ENCODE measurements at regions of chr18 and their contacts with region 1.

Region 1: GRCh38 chr18:58864146-58865032 is at the start of gene ZNF532:
- DNase-seq: no peak
- H3K4me3 ChIP-seq: peak within 1 kb of the TSS; percentile 52 to 69
- H3K27ac ChIP-seq: peak within 1 kb of the TSS; percentile 99 to 100
- H3K4me1 ChIP-seq: peaks cover 16 to 74% of the 10 kb centered on the region in 2 donors
- H3K27me3 ChIP-seq: no peaks in the 10 kb centered on the region
- CTCF ChIP-seq: no peak
- total RNA-seq, gene ZNF532: 161 TPM

Region 2: DNA sequence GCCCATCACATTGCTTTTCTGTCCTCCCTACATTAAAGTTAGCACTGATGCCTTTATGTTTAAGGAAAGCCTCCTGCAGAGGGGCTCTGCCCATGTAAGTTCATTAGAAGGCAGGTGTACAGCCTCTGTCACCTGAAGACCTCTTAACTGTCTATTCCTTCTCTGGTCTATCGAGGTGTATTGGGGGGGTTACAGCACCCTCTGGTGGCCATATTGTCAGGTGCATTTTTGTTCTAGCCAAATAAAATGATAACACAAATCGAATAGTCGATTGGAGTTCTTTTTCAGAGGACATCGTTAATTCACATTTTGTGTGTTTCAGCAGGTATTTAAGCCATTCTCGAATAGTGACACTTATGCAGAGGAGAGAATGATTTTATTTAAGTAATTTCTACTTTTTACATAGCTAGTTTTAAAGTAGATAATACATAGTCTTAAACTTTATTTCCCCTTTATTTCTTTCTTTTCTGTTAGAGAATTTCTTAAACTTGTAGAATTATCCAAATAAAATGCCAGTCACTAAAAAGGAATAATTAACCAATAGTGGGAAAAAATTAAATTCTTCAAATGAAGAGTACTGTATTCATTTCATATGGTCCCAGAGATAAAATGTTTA is 683.5 kb before region 1 on chr18:
- intact Hi-C with region 1: no loop called
- DNase-seq: peak in 1 of 2 donors; percentile 69
- H3K4me3 ChIP-seq: no peak overlapping the region
- H3K27ac ChIP-seq: no peak overlapping the region
- H3K4me1 ChIP-seq: no peaks in the 10 kb centered on the region
- H3K27me3 ChIP-seq: no peaks in the 10 kb centered on the region
- CTCF ChIP-seq: peak; percentile 38 to 74 (median 68)

Region 3: GRCh38 chr18:58738322-58738721 is 126.1 kb before region 1 on chr18:
- intact Hi-C with region 1: no loop called
- DNase-seq: no peak
- H3K4me3 ChIP-seq: no peak overlapping the region
- H3K27ac ChIP-seq: no peak overlapping the region
- H3K4me1 ChIP-seq: no peaks in the 10 kb centered on the region
- H3K27me3 ChIP-seq: no peaks in the 10 kb centered on the region
- CTCF ChIP-seq: no peak

Region 4: GRCh38 chr18:58882044-58882443 is 17.7 kb after region 1 on chr18:
- intact Hi-C with region 1: loop called (anchors 2 kb)
- DNase-seq: no peak
- H3K4me3 ChIP-seq: no peak overlapping the region
- H3K27ac ChIP-seq: peak overlapping the region; percentile 72 to 77
- H3K4me1 ChIP-seq: peaks cover 16 to 53% of the 10 kb centered on the region in 2 donors
- H3K27me3 ChIP-seq: no peaks in the 10 kb centered on the region
- CTCF ChIP-seq: no peak